Panc1 (cell line): ENCODE measurements at regions of chr3 and their contacts with region 1.

Region 1: GRCh38 chr3:194773216-194773615 is 87.5 kb downstream of the FAM43A start:
- DNase-seq: no peak
- ATAC-seq: no peak
- H3K4me3 ChIP-seq: no peak overlapping the region
- H3K27ac ChIP-seq: no peak overlapping the region
- H3K4me1 ChIP-seq: peaks cover 5% of the 10 kb centered on the region; the same call in 1 of the 2 replicates
- H3K27me3 ChIP-seq: no peaks in the 10 kb centered on the region
- CTCF ChIP-seq: no peak

Region 2: GRCh38 chr3:194810076-194810475 is 36.9 kb after region 1 on chr3:
- CTCF ChIA-PET with region 1: no interaction called
- POLR2A ChIA-PET with region 1: interaction called, 13 read pairs
- in situ Hi-C with region 1: no loop called
- intact Hi-C with region 1: no loop called
- DNase-seq: no peak
- ATAC-seq: no peak
- H3K4me3 ChIP-seq: no peak overlapping the region
- H3K27ac ChIP-seq: no peak overlapping the region
- H3K4me1 ChIP-seq: no peaks in the 10 kb centered on the region
- H3K27me3 ChIP-seq: no peaks in the 10 kb centered on the region
- CTCF ChIP-seq: no peak